ENCODE measurements at regions of chr3 and their contacts with region 1.

Region 1: GRCh38 chr3:94062431-94063404 is at the starts of genes DHFR2 and NSUN3:
- DNase-seq: peak; percentile 92 to 97 (median 94)
- ATAC-seq: peak; percentile 97
- H3K4me3 ChIP-seq: peak within 1 kb of the TSS; percentile 42 to 51
- H3K27ac ChIP-seq: peak within 1 kb of the TSS; percentile 79 to 97 (median 88)
- H3K4me1 ChIP-seq: peaks cover 39% of the 10 kb centered on the region
- H3K27me3 ChIP-seq: no peaks in the 10 kb centered on the region
- CTCF ChIP-seq: peak in 1 of 7 experiments; percentile 1
- POLR2A ChIP-seq: peak; percentile 52 to 92 (median 83)
- total RNA-seq, gene DHFR2: 2.6 to 6.2 TPM
- total RNA-seq, gene NSUN3: 5.6 to 13.2 TPM

Region 2: GRCh38 chr3:93979833-93980676 is 82.7 kb before region 1 on chr3 and contains the start of gene ARL13B:
- intact Hi-C with region 1: loop called (anchors 10 kb)
- DNase-seq: peak; percentile 97 to 99 (median 98)
- ATAC-seq: peak; percentile 100
- H3K4me3 ChIP-seq: peak within 1 kb of the TSS; percentile 60 to 86
- H3K27ac ChIP-seq: peak within 1 kb of the TSS; percentile 75 to 92 (median 85)
- H3K4me1 ChIP-seq: peaks cover 14% of the 10 kb centered on the region
- H3K27me3 ChIP-seq: no peaks in the 10 kb centered on the region
- CTCF ChIP-seq: peak in 1 of 7 experiments; percentile 24
- POLR2A ChIP-seq: peak; percentile 20 to 82 (median 81)
- total RNA-seq, gene ARL13B: 6.7 to 10.5 TPM

Measured in body of pancreas (tissue), 4 donors.